Posterior vena cava (tissue), 2 donors: ENCODE measurements at regions of chr11 and their contacts with region 1.

Region 1: DNA sequence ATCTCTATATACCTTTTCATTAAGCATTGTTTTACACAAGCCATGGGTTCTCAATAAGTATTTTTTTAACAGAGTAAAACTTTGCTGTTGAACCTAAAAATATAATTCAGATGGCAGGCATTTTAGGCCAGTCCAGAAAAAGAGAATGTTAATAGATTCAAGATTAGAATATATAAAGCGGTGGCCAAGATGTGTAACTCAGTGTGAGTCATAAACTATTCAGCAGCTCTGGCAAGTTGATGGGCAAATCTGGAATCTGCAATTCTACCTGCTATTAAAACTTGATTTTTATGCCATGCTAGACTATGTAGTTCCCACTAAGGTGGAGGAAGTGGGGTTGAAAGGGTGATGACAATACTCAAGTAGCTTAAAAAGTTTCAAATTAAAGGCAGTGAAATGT is 45.4 kb downstream of the CASP12 start:
- DNase-seq: no peak

Region 2: DNA sequence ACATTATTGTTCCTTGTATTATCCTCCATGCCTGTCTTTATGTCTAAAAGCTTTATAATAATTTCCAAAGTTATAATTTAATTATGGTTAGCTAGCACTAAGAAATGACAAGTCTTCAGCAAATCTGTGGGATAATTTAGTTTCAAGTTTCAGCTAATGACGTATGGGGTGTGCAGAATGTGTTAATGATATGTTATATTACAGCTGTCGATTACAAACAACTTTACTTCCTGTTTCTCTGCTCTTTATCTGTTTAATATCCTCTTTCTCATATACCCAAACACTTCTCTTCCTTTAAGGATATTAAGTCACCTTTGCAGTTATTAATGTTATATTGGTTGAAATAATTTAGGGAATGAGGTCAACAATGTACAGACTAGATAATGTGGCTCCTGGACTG is 116.3 kb before region 1 on chr11:
- intact Hi-C with region 1: no loop called
- DNase-seq: no peak

Region 3: DNA sequence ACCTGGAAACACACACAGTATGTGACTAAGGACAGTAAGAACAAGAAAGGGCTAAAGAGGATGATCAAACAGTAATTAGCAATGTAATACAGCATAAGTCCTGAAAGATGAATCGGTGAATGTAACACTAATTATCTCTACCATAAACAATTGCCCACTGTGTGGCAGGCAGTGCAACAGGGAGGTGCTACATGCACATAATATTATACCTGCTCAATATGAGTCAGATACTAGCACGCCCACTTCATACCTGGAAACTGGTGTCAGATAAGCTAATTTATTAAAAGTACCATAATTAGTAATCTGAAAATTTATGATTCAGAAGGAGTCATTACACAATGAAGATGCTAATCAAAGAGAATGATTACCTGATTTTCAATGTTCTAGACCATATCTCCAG is 30.5 kb after region 1 on chr11:
- intact Hi-C with region 1: loop called in 1 of 2 experiments (anchors 2 kb)
- DNase-seq: no peak